Heart left ventricle (tissue), 16 donors: ENCODE measurements at regions of chr9 and their contacts with region 1.

Region 1: DNA sequence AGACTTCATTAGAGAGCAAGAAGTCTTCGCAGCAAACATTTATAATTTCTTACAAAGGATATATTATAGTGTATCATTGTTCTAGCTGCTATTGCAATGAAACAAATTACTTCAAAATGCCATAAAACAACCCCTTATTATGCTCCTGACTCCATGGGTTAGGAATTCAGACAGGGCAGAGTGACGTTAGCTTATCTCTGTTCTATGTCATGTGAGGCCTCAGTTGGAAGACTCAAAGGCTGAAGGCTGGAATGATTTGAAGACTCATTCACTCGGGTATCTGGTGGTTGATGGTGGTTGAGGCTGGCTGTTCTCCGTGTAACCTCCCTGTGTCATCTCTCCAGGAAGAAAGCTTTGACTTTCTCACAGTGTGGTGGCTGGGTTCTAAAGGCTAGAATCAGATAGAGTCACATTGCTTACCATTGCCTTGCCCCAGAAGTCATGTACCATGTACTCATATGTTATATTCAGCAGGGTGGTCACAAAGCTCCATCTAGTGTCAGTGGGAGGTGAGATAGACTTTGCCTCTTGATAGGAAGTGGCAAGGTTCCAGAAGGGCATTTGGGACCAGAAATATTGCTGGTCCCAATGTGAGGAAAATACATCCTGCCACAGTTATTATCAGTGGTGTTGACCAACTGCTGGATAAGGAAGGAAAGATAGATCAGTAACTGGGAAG is 226.9 kb downstream of the TMEM38B start:
- DNase-seq: no peak
- ATAC-seq: no peak
- H3K4me3 ChIP-seq: no peak overlapping the region
- H3K27ac ChIP-seq: no peak overlapping the region
- H3K4me1 ChIP-seq: peaks cover 0 to 6% (median 0%) of the 10 kb centered on the region in 12 donors
- H3K27me3 ChIP-seq: no peaks in the 10 kb centered on the region
- CTCF ChIP-seq: no peak
- POLR2A ChIP-seq: no peak

Region 2: GRCh38 chr9:105973951-105974351 is 52.8 kb after region 1 on chr9:
- intact Hi-C with region 1: loop called in 1 of 10 experiments (anchors 10 kb)
- DNase-seq: no peak
- ATAC-seq: peak in 2 of 4 donors; percentile 49 to 58
- H3K4me3 ChIP-seq: no peak overlapping the region
- H3K27ac ChIP-seq: no peak overlapping the region
- H3K4me1 ChIP-seq: peaks cover 0 to 23% (median 9%) of the 10 kb centered on the region in 12 donors
- H3K27me3 ChIP-seq: no peaks in the 10 kb centered on the region
- CTCF ChIP-seq: no peak
- POLR2A ChIP-seq: no peak